Right lobe of liver (tissue), 6 donors: ENCODE measurements at regions of chr7 and their contacts with region 1.

Region 1: DNA sequence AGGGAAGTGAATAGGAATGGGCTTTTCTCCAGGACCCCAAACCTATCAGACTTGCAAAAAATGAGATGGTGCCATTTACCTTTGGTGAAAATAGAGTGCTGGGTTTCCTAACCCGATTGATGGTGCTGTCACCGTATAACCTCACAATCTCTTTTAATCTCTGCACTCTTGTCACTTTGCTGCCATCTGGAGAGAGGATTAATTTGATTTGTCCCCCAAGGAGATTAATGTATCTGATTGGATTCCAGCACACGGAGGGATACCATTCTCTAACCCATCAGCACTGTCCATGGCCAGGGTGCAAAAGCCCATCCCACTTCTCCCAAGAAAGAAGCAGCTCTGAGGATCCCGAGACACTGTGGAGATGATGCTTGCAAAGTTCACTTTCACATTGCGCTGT is 86.3 kb upstream of the NFE2L3 start:
- DNase-seq: no peak
- ATAC-seq: no peak
- H3K4me3 ChIP-seq: no peak overlapping the region
- H3K27ac ChIP-seq: no peak overlapping the region
- H3K4me1 ChIP-seq: no peaks in the 10 kb centered on the region
- H3K27me3 ChIP-seq: no peaks in the 10 kb centered on the region
- CTCF ChIP-seq: no peak
- POLR2A ChIP-seq: no peak

Region 2: GRCh38 chr7:25894902-25895791 is 170.5 kb before region 1 on chr7:
- intact Hi-C with region 1: loop called (anchors 5 kb)
- DNase-seq: peak; percentile 75
- ATAC-seq: peak; percentile 81 to 85 (median 84)
- H3K4me3 ChIP-seq: peak overlapping the region in 2 of 3 donors; percentile 25 to 36
- H3K27ac ChIP-seq: no peak overlapping the region
- H3K4me1 ChIP-seq: no peaks in the 10 kb centered on the region
- H3K27me3 ChIP-seq: no peaks in the 10 kb centered on the region
- CTCF ChIP-seq: peak; percentile 56 to 79 (median 78)
- POLR2A ChIP-seq: no peak